Endothelial cell of umbilical vein (primary cell): ENCODE measurements at regions of chr20 and their contacts with region 1.

Region 1: GRCh38 chr20:61634376-61634775 is 382.3 kb downstream of the CDH4 start:
- DNase-seq: no peak
- H3K4me3 ChIP-seq: no peak overlapping the region
- H3K27ac ChIP-seq: no peak overlapping the region
- H3K4me1 ChIP-seq: no peaks in the 10 kb centered on the region
- H3K27me3 ChIP-seq: no peaks in the 10 kb centered on the region
- CTCF ChIP-seq: no peak
- POLR2A ChIP-seq: no peak

Region 2: GRCh38 chr20:61611401-61612180 is 22.8 kb before region 1 on chr20:
- CTCF ChIA-PET with region 1: no interaction called
- POLR2A ChIA-PET with region 1: no interaction called
- dilution Hi-C with region 1: no loop called
- intact Hi-C with region 1: loop called (anchors 1 kb)
- DNase-seq: no peak
- H3K4me3 ChIP-seq: no peak overlapping the region
- H3K27ac ChIP-seq: no peak overlapping the region
- H3K4me1 ChIP-seq: no peaks in the 10 kb centered on the region
- H3K27me3 ChIP-seq: no peaks in the 10 kb centered on the region
- CTCF ChIP-seq: no peak
- POLR2A ChIP-seq: no peak

Region 3: DNA sequence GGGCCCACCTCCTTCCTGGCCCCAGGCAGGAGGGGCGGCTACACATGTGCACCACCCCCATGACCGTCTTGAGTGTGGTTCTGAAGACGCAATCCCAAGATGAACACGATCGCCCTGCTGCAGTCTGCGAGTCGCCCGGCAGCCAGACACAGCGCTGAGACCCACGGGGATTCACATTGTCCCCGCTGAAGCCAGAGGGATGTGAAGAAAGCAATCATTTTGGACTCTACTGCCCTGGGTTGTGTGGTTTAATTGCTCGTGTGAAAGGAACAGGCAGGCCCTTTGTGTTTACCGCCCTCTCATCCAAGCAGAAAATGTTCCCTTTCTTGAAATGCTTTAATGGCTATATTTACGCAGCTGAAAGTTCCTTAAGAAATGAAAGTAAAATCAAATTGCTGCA is 151.9 kb after region 1 on chr20:
- CTCF ChIA-PET with region 1: no interaction called
- POLR2A ChIA-PET with region 1: no interaction called
- dilution Hi-C with region 1: no loop called
- intact Hi-C with region 1: no loop called
- DNase-seq: no peak
- H3K4me3 ChIP-seq: no peak overlapping the region
- H3K27ac ChIP-seq: no peak overlapping the region
- H3K4me1 ChIP-seq: no peaks in the 10 kb centered on the region
- H3K27me3 ChIP-seq: no peaks in the 10 kb centered on the region
- CTCF ChIP-seq: no peak
- POLR2A ChIP-seq: no peak